ENCODE measurements at regions of chr7 and their contacts with region 1.

Region 1: DNA sequence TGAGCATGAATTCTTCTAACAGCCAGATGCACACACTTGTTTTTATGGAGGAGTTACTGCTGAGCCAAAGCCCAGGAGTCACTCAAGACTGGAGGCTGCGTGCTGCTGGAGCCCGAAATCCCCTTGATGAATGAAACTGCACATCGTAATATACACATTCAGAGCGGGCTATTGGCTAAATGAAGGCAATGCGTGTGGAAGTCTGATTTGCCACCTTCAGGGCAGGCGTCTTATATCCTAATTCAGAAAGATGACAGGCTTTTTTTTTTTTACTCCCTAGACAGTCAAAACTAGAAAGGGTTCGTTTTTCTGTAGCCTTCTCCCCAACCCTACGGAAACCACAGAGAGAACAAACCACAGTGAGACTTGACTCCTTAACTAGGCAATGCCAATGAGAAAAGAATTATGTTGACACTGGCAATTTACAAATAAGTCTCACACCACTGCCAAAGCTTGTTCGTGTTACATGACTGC is 227.2 kb upstream of the KLF14 start:
- DNase-seq: peak; percentile 73
- CTCF ChIP-seq: no peak

Region 2: GRCh38 chr7:130912862-130913631 is 48.1 kb before region 1 on chr7:
- CTCF ChIA-PET with region 1: interaction called, 13 read pairs
- POLR2A ChIA-PET with region 1: interaction called, 3 read pairs
- DNase-seq: peak; percentile 71
- CTCF ChIP-seq: no peak

Region 3: DNA sequence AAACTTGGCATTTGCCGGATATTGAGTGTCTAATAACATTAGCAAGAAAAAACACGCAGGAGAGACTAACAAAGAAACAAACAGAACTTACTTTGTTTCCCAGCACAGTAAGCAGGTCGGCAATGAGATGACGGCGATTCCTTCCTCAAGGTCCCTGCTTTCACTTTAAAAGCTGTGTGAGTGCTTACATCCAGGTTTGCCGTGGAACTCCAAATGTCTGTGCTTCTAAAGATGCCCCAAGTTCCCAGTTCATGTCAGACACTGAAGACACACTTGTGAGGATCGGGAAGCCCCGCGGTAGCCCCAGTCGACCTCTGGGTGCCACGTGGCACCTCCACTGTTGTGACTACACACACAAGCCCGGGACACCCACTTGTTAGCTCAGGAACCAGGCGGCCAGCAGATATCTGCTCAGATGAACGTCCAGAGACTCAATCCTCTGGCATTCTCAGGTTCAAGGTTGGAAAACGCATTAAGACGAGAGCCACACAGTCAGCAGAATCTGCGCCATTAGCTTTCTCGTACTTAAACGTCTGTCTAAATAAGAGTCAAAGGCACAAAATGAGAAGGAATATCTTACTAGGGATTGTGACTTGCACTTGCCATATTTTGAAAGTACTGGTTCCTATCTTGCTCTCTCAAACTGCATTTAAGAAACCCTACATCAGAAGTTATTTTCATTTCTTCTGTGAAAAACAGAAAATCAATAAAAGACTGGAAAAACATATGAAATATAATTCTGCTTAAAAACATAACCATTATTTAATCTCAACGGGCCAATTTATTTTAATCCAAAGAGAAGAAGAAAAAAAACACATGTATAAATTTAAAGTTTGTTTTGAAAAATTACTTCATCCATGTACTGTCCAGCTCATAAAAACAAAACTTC is 19.6 kb before region 1 on chr7:
- CTCF ChIA-PET with region 1: interaction called, 97 read pairs
- POLR2A ChIA-PET with region 1: interaction called, 12 read pairs
- DNase-seq: no peak
- CTCF ChIP-seq: no peak

Region 4: DNA sequence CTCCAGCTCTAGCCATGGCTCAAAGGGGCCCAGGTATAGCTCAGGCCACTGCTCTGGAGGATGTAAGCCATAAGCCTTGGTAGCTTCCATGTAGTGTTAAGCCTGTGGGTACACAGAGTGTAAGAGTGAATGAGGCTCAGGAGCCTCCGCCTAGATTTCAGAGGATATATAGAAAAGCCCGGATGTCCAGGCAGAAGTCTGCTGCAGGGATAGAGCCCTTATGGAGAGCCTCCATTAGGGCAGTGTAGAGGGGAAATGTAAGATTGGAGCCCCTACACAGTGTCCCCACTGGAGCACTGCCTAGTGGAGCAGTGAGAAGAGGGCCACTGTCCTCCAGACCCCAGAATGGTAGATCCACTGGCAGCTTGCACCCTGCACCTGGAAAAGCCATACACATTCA is 13.6 kb after region 1 on chr7:
- CTCF ChIA-PET with region 1: interaction called, 25 read pairs
- POLR2A ChIA-PET with region 1: interaction called, 4 read pairs
- DNase-seq: no peak
- CTCF ChIP-seq: no peak

Region 5: DNA sequence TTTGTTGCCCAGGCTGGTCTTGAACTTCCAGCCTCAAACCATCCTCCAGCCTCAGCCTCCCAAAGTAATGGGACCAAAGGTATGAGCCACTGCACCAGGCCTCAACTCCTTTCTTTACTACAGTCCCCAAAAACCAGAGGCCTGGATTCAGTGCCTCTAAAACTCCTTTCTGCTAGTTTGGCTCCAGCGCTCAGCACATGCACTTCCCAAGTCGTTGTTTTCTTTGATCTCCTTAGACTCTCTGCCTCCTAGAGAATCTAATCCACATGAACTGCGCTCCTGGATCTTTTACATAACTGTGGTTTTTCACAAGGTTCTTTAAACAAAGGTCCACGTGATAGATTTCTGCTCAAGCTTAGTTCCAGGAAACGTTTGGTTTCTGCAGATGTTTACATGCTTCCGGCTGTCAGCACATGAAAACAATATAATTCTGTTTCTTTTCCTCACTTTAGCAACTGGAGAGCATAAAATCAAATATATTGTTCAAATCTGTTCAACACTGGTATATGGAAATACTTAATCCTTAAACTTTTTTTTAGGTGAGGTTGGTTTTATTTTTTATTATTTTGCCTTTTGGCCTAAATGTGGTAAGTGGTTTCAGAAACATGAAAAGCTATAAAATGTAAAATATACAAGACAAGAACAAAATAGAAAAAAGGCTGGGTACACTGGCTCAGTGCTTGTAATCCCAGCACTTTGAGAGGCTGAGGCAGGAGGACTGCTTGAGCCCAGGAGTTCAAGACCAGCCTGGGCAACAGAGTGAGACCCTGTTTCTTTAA is 96.0 kb after region 1 on chr7:
- CTCF ChIA-PET with region 1: no interaction called
- POLR2A ChIA-PET with region 1: no interaction called
- DNase-seq: peak; percentile 31
- CTCF ChIP-seq: no peak